Heart left ventricle (tissue), 16 donors: ENCODE measurements at regions of chr18 and their contacts with region 1.

Region 1: DNA sequence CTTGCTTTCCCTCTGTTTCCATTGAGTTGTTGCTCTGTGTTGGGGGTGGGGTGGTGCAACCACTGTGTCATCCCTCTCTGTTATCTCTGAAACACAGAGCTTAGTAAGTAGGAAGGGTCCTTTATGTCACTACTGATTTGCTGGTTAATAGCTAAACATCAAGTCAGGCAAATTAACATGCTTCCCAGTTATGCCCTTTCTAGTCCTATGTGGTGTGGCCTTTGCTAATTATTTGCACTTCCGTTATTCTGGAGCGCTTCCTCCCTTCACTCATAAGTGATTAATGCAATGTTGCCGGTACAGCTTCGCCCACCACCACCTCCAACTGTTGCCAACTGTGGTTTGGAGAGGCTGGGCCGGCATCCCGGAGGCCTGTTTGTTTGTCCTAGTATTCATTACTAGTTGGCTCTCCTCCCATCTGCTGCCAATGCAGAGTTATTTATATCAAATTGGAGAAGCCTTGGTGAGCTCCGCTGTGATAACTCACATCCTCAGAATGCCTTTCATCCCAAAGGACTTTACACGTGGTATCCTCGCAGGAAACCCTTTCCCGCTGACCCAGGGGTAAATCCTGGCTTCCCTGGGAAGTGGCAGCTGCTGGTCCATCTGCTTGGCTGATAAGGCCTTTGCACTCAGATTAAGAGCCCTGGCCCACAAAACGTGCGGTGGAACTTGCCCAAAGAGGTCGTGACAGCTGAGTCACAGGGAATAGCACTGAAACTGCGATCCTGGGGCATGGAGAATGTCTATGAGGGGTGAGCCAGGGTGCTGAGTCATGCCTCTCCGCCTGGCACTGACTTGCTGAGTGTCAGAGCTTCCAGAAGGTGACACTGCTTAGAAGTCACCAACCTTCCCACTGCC is 72.0 kb upstream of the ZCCHC2 start:
- DNase-seq: peak; percentile 58 to 87 (median 74)
- ATAC-seq: peak; percentile 88 to 97 (median 94)
- H3K4me3 ChIP-seq: no peak overlapping the region
- H3K27ac ChIP-seq: peak overlapping the region in 11 of 12 donors; percentile 53 to 78 (median 73)
- H3K4me1 ChIP-seq: peaks cover 0 to 33% (median 11%) of the 10 kb centered on the region in 12 donors
- H3K27me3 ChIP-seq: no peaks in the 10 kb centered on the region
- CTCF ChIP-seq: no peak
- POLR2A ChIP-seq: no peak

Region 2: DNA sequence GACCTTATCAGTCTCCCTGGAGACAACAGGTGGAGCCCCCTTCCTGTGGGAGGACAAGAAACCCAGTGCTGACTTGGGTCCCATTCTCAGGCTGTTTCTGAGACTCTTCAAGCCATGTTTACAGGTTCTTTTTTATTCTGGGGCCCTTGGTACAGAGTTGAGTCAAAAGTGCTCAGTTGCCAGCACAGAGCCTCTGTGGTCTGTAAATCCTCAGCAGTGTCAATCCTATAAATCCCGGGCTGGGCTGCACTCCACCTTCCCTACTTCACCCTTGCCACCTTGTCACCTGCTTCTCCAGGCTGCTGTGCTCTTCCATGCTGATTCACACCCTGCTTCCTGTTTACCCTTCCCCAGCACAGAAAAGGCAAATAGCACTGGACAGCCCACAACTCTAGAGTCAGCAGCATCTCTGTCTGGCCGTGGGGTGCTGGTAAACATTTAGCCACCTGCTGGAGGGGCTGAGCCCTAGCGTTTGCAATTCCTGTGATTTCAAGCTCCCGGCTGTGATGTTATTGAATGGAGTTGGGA is 50.9 kb before region 1 on chr18:
- intact Hi-C with region 1: loop called in 1 of 10 experiments (anchors 10 kb)
- DNase-seq: no peak
- ATAC-seq: no peak
- H3K4me3 ChIP-seq: no peak overlapping the region
- H3K27ac ChIP-seq: no peak overlapping the region
- H3K4me1 ChIP-seq: no peaks in the 10 kb centered on the region
- H3K27me3 ChIP-seq: no peaks in the 10 kb centered on the region
- CTCF ChIP-seq: peak in 1 of 12 donors; percentile 6
- POLR2A ChIP-seq: no peak